ENCODE measurements at regions of chr14 and their contacts with region 1.

Region 1: DNA sequence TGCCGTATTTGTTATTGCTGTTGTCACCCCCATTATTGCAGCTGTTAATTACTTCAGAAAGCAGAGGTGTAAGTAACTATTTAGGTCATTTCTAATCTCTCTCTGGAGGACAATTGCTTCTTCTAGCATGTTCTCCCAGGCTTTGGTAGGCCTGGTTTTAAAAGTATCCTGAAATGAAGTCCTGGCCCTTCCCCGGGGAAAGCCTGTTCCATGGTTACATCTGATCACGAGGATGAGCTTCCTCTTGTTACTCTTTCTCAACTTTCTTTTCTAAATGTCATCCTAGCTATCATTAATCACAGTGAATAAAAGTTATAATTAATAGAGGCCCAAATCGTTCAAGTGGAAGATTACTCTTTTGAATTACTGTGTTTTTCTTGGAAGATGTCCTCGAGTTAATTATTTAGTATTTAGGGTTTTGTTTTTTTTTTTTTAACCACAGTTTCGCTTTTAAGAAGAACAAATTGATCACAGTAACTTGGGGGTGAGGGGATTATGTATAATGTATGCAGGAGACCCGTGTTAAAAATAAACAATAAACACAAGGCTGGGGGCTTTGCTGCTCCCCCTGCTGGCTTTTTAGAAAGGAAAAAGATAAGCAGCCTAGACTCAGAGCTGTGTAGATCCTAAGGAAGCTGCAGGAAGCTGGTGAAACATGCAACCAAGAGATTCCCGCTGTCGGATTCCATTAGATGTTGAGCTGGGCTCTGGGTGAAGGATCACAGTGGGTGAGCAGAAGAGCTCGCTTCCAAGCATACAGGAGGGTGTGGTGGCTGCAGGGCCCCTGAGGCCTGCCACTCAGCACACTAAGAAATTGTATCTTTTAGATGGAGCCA is 420.1 kb downstream of the FUT8 start:
- DNase-seq: peak; percentile 5
- ATAC-seq: peak; percentile 48
- H3K4me3 ChIP-seq: no peak overlapping the region
- H3K27ac ChIP-seq: no peak overlapping the region
- H3K4me1 ChIP-seq: no peaks in the 10 kb centered on the region
- H3K27me3 ChIP-seq: peaks cover 17% of the 10 kb centered on the region
- CTCF ChIP-seq: peak; percentile 31
- POLR2A ChIP-seq: no peak
- RAD21 ChIP-seq: no peak

Region 2: DNA sequence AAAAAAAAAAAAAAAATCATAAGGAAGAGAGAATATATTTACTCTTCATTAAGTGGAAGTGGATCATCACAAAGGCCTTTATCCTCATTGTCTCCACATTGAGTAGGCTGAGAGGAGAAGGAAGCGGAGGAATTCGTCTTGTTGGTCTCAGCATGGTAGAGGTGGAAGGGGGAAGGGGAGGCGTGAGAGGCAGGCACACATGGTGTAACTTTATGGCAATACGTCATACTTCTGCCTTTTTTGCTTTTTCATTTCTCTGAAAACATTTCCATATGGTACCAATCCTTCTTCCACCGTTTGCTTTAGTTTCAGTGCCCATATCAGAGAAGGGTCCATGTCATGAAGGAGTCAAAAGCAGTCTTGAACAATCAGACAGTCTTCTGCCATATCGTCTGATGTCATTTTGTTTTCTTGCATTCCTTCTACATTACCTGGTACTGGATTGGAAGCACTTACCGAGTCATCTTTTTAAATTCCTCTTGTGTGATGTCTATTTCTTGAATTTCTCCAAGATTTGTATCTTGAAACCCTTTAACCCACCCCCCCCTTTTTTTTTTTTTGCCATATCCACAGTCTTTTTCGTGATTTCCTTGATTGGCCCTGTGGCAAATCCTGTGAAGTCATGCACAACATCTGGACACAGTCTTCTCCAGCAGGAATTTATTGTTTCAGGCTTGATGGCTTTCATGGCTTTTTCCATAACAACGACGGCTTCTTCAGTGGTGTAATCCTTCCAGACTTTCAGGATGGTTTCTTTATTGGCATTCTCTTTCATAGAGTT is 411.3 kb before region 1 on chr14:
- CTCF ChIA-PET with region 1: no interaction called
- POLR2A ChIA-PET with region 1: interaction called, 8 read pairs
- dilution Hi-C with region 1: no loop called
- in situ Hi-C with region 1: loop called (anchors 5 kb)
- intact Hi-C with region 1: no loop called
- DNase-seq: peak; percentile 78
- ATAC-seq: peak; percentile 54
- H3K4me3 ChIP-seq: no peak overlapping the region
- H3K27ac ChIP-seq: no peak overlapping the region
- H3K4me1 ChIP-seq: peaks cover 5% of the 10 kb centered on the region; the same call in 1 of the 2 replicates
- H3K27me3 ChIP-seq: no peaks in the 10 kb centered on the region
- CTCF ChIP-seq: no peak
- POLR2A ChIP-seq: no peak
- RAD21 ChIP-seq: no peak

Region 3: DNA sequence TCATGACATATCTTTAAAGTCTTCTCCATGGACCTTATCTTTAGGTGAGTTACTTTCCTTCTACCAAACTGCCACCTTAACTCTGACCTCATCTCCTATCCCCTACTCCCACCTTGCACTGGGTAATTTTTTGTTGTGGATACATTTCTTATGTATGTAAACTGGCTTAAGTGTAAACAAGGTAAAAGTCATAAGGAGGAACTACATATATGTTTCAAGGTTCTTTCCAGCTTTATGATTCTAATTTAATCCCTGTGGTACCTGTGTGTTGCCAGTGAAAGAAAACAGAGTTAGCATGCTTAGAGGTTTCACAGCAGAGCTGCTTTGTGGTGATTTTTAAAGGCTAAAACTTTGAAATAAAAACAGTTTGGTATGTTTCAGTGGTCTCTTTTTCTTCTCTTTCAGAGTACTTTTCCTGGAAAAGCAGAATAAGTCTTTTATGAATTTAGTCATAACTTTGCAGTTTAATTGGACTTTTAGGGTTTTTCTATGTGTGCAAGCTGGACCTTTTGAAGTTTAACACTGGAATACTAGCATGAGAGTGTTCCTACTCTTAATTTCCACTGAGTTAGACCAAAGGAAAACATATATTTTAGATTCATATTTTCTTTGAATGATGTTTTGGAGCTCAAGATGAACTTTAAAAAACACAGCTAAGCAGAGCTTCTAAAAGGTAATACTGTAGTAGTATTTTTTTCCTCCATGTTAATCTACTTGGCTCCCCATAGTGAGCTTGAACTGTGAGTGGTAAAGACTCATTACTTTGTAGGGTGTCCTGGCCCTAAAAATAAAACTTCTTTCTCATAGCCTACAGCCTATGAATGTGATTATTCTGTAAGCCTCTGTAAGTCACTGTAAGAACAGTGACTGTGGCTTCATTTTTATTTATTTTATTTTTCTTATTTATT is 314.8 kb before region 1 on chr14:
- CTCF ChIA-PET with region 1: interaction called, 10 read pairs
- POLR2A ChIA-PET with region 1: no interaction called
- dilution Hi-C with region 1: no loop called
- in situ Hi-C with region 1: no loop called
- intact Hi-C with region 1: no loop called
- DNase-seq: no peak
- ATAC-seq: no peak
- H3K4me3 ChIP-seq: no peak overlapping the region
- H3K27ac ChIP-seq: no peak overlapping the region
- H3K4me1 ChIP-seq: no peaks in the 10 kb centered on the region
- H3K27me3 ChIP-seq: no peaks in the 10 kb centered on the region
- CTCF ChIP-seq: no peak
- POLR2A ChIP-seq: no peak
- RAD21 ChIP-seq: no peak

Measured in IMR-90 (cell line).